MCF 10A (cell line): ENCODE measurements at regions of chr10 and their contacts with region 1.

Region 1: GRCh38 chr10:96292971-96293920 is 11.0 kb upstream of the DNTT start:
- DNase-seq: peak; percentile 61
- H3K4me3 Mint-ChIP-seq: no peak overlapping the region
- H3K27ac Mint-ChIP-seq: no peak overlapping the region
- H3K4me1 Mint-ChIP-seq: no peaks in the 10 kb centered on the region
- H3K27me3 Mint-ChIP-seq: peaks cover 8% of the 10 kb centered on the region
- CTCF ChIP-seq: peak; percentile 43

Region 2: GRCh38 chr10:96043033-96043932 is 250.0 kb before region 1 on chr10 and contains the start of gene CCNJ:
- CTCF ChIA-PET with region 1: interaction called, 29 read pairs
- POLR2A ChIA-PET with region 1: no interaction called
- intact Hi-C with region 1: loop called (anchors 1 kb)
- DNase-seq: peak; percentile 90
- H3K4me3 Mint-ChIP-seq: peak within 1 kb of the TSS; percentile 91
- H3K27ac Mint-ChIP-seq: peak within 1 kb of the TSS; percentile 94
- H3K4me1 Mint-ChIP-seq: peaks cover 26% of the 10 kb centered on the region
- H3K27me3 Mint-ChIP-seq: peaks cover 8% of the 10 kb centered on the region
- CTCF ChIP-seq: peak; percentile 6
- total RNA-seq, gene CCNJ: 9.3 and 10.8 TPM in 2 replicates

Region 3: DNA sequence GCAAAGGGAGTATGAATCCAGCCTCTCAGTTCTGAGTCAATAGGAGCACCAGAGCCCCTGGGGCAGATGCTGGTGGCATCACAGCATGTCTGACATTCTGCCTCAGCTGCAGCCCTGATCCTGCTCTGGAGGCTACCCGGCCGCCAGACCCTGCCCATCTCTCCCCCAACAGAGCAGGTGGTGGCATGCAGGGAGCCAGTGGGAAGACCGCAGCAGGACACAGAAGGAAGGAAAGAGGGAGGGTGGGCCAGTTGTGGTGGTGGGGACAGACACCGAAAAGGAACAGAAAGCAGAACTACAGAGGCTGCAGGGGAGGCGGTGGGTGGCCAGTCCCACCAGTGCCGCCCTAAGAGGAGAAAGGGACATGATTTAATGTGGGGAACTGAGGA is 57.2 kb before region 1 on chr10:
- CTCF ChIA-PET with region 1: interaction called, 250 read pairs
- POLR2A ChIA-PET with region 1: interaction called, 4 read pairs
- intact Hi-C with region 1: no loop called
- DNase-seq: no peak
- H3K4me3 Mint-ChIP-seq: no peak overlapping the region
- H3K27ac Mint-ChIP-seq: no peak overlapping the region
- H3K4me1 Mint-ChIP-seq: no peaks in the 10 kb centered on the region
- H3K27me3 Mint-ChIP-seq: no peaks in the 10 kb centered on the region
- CTCF ChIP-seq: no peak

Region 4: DNA sequence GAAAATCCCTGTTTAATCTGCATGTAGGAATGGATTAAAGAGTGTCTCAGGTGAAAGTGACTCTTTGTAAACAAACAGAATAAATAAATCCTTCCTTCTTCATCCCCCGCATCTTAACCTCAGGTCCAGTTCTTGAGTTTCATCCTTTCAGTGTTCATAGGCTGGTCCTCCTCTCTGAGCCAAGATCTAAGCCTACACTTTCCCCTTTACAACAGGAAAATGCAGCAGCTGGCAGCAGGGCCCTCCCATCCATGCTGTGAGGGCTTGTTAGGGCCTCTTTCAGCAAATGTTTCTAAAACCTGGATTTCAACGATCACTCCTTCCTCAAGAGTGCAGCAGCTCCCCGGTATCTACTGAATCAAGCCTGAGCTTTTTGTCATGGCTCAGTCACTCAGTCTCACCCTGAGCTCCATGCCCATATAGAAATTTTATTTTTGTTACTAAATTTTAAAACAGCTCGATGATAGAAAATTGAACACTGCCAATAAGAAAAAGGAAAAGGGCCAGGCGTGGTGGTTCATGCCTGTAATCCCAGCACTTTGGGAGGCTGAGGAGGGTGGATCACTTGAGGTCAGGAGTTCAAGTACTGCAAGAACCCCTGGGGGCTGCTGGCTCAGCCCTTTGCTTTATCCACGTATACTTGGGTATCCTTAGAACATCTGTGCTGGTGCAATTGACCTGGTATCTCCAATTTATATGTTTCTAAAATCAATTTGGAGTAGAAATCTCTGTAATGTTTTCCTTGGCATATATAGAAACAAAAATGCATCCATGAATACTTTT is 37.5 kb before region 1 on chr10:
- CTCF ChIA-PET with region 1: interaction called, 11 read pairs
- POLR2A ChIA-PET with region 1: no interaction called
- intact Hi-C with region 1: no loop called
- DNase-seq: no peak
- H3K4me3 Mint-ChIP-seq: no peak overlapping the region
- H3K27ac Mint-ChIP-seq: no peak overlapping the region
- H3K4me1 Mint-ChIP-seq: no peaks in the 10 kb centered on the region
- H3K27me3 Mint-ChIP-seq: no peaks in the 10 kb centered on the region
- CTCF ChIP-seq: no peak

Region 5: DNA sequence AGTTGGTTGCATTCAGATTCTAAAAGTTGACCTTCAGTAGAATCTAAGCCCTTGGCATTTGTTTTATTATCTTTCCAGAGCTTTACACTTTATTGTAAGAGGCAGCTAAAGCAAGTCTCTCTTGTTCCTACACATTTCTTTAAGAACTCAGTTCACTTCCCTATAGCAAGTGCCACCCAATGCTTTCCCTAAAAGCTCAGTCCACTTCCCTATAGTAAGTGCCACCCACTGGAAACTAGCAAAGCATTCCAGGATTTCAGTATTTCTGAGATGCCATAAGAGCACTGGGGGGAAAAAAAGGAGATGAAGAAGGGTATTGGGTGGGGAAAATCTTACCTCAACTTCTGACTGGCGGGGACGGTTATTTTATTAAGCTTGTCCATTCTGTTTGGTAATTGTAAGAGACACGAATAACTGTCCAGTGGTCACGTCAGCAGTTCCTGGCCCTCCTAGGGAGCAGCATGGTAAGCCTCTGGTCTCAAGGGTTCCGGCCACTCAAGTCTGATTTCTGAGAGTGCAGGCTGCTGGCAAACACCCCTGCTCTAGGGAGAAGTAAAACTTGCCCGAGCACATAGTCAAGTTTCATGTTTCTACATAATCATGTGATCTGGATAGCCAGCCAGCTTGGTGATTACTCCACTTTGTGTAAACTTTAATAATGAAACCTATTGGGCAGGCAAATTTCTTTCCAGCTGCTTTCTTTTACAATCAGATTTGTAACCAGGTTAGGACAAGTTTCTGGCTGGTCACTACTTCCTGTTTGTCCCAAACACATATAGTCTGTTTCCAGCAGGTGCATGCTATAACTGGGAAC is 22.0 kb before region 1 on chr10 and contains the start of gene BLNK:
- CTCF ChIA-PET with region 1: interaction called, 14 read pairs
- POLR2A ChIA-PET with region 1: interaction called, 28 read pairs
- intact Hi-C with region 1: no loop called
- DNase-seq: peak; percentile 79
- H3K4me3 Mint-ChIP-seq: peak within 1 kb of the TSS; percentile 74
- H3K27ac Mint-ChIP-seq: peak within 1 kb of the TSS; percentile 82
- H3K4me1 Mint-ChIP-seq: peaks cover 24% of the 10 kb centered on the region
- H3K27me3 Mint-ChIP-seq: no peaks in the 10 kb centered on the region
- CTCF ChIP-seq: no peak
- total RNA-seq, gene BLNK: 1.0 and 1.1 TPM in 2 replicates